ENCODE measurements at regions of chr19 and their contacts with region 1.

Region 1: GRCh38 chr19:7394731-7395359 is 46.1 kb downstream of the ARHGEF18 start:
- DNase-seq: peak; percentile 77 to 95
- H3K4me3 ChIP-seq: peak overlapping the region; percentile 81
- H3K27ac ChIP-seq: peak overlapping the region; percentile 28
- H3K4me1 ChIP-seq: peaks cover 67% of the 10 kb centered on the region
- H3K27me3 ChIP-seq: no peaks in the 10 kb centered on the region
- CTCF ChIP-seq: no peak; the same call in 1 of the 2 replicates

Region 2: GRCh38 chr19:7098701-7099596 is 295.9 kb before region 1 on chr19:
- CTCF ChIA-PET with region 1: no interaction called
- POLR2A ChIA-PET with region 1: interaction called, 11 read pairs
- intact Hi-C with region 1: no loop called
- DNase-seq: peak; percentile 65 to 81
- H3K4me3 ChIP-seq: peak overlapping the region; percentile 79
- H3K27ac ChIP-seq: peak overlapping the region; percentile 73
- H3K4me1 ChIP-seq: 0 out of 2 replicates have a peak, but pooled peaks cover 4% of the 10 kb centered on the region
- H3K27me3 ChIP-seq: no peaks in the 10 kb centered on the region
- CTCF ChIP-seq: no peak

Region 3: DNA sequence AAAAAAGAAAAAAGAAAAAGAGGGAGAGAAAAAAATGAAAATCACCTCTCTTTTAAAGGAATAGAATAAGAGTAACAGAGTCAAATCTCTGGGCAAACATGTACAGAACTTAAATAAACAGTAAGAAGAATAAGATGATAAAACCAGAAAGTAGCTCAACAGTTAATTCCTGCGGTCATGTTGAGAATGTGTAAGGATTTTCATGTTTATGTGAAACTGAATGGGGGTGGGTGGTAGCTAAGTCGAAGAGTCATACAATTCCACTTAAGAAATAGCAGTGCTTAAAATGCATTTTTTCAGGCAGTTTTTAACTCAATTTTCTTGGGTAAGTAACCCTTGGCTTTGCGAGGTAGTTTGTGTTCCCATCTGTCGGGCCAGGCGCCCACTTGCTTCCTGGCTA is 33.1 kb after region 1 on chr19:
- CTCF ChIA-PET with region 1: interaction called, 15 read pairs
- POLR2A ChIA-PET with region 1: no interaction called
- intact Hi-C with region 1: loop called (anchors 1 kb)
- DNase-seq: no peak
- H3K4me3 ChIP-seq: no peak overlapping the region
- H3K27ac ChIP-seq: no peak overlapping the region
- H3K4me1 ChIP-seq: peaks cover 37% of the 10 kb centered on the region
- H3K27me3 ChIP-seq: no peaks in the 10 kb centered on the region
- CTCF ChIP-seq: no peak

Region 4: GRCh38 chr19:7460562-7460966 is 65.7 kb after region 1 on chr19:
- CTCF ChIA-PET with region 1: no interaction called
- POLR2A ChIA-PET with region 1: interaction called, 4 read pairs
- intact Hi-C with region 1: loop called (anchors 2 kb)
- DNase-seq: peak; percentile 92 to 99
- H3K4me3 ChIP-seq: peak overlapping the region; percentile 32; the same call in 1 of the 2 replicates
- H3K27ac ChIP-seq: peak overlapping the region; percentile 98
- H3K4me1 ChIP-seq: peaks cover 36% of the 10 kb centered on the region
- H3K27me3 ChIP-seq: no peaks in the 10 kb centered on the region
- CTCF ChIP-seq: no peak

Region 5: DNA sequence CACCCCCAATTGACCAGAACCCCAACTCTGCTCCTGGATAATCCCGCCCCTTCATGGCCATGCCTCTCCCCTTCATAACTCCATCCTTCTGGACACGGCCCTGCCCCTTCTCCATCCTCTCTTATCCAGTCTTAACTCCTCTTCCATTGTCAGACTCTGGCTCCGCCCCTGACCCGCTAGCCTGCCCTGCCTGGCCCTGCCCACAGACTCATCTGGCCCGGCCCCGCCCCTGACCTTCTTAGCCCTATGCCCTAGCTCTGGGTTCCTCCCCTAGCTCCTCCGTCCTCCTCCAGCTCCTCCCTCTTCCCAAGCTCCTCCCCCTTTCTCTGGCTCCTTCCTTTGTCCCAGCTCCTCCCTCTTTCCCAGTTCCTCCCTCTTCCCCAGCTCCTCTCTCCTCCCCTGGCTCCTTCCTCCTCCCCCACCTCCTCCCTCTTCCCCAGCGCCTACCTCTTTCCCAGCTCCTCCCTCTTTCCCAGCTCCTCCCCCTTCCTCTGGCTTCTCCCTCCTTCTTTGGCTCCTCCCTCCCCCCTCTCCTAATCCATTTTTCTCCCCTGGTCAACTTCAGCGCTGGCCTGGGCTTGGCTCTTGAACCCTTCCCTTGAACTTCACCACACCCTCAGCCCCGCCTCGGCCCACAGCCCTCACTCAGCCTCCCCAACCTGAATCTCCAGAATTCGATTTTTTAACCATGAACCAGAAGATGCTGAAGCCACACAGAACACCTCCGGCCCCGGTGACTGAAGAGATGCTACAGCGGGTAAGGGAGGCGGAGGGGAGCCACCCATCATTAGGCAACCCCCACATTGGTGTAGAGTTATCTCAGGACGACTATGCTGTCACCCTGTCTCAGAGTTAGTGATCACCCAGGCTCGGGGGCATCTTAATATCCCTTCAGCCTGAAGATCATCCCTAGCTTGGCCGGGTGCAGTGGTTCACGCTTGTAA is 111.8 kb after region 1 on chr19:
- CTCF ChIA-PET with region 1: interaction called, 19 read pairs
- POLR2A ChIA-PET with region 1: interaction called, 22 read pairs
- intact Hi-C with region 1: loop called (anchors 5 kb)
- DNase-seq: peak; percentile 98
- H3K4me3 ChIP-seq: no peak overlapping the region; the same call in 1 of the 2 replicates
- H3K27ac ChIP-seq: no peak overlapping the region
- H3K4me1 ChIP-seq: peaks cover 24% of the 10 kb centered on the region
- H3K27me3 ChIP-seq: no peaks in the 10 kb centered on the region
- CTCF ChIP-seq: no peak

Region 6: DNA sequence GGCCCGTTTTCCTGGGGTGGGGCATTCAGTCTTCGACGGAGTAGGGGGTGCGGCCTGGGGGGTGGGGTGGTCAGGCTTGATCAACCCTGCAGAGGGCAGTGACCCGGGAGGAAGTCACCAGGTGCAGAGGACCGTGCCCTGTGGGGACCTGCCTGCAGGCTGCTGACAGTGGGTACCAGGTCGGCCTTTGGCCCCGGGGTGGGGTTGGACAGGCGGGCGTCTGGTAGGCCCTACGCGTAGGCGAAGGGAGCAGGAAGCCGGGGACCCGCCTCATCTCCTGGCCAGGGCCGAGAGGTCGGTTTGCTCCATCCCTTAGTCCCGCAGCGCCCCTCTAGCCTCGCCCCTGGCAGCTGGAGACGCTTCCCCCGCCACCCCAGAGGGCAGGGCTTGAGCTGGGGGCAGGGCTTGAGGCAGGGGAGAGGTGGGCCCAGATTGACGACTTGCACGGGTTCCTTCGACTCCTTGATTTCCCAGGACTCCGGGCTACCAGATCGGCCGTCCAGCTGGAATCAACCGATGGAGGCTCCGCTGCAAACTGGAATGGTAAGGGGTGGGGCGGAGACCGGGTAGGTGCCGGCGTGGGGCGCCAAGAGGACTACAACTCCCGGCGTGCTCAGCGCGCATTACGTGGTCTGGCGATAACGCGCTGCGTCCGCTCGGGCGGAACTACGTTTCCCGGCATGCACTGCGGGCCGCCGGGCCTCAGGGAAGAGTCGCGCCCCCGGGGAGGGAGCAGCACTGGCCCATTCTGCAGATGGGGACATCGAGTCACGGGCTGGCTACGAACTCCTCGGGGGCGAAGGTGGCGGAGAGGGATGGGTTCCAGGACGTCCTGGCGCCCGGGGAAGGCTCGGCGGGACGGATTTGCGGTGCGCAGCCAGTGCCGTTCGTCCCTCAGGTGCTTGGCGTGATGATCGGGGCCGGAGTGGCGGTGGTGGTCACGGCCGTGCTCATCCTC is 140.5 kb after region 1 on chr19 and contains the start of gene PNPLA6:
- CTCF ChIA-PET with region 1: interaction called, 5 read pairs
- POLR2A ChIA-PET with region 1: no interaction called
- intact Hi-C with region 1: loop called (anchors 10 kb)
- DNase-seq: peak; percentile 87 to 92
- H3K4me3 ChIP-seq: peak within 1 kb of the TSS; percentile 83
- H3K27ac ChIP-seq: peak within 1 kb of the TSS; percentile 76; the same call in 1 of the 2 replicates
- H3K4me1 ChIP-seq: peaks cover 9% of the 10 kb centered on the region
- H3K27me3 ChIP-seq: no peaks in the 10 kb centered on the region
- CTCF ChIP-seq: no peak
- total RNA-seq, gene PNPLA6: 121 and 139 TPM in 2 replicates

Region 7: GRCh38 chr19:7552781-7553180 is 157.9 kb after region 1 on chr19:
- CTCF ChIA-PET with region 1: interaction called, 4 read pairs
- POLR2A ChIA-PET with region 1: interaction called, 18 read pairs
- intact Hi-C with region 1: no loop called
- DNase-seq: no peak
- H3K4me3 ChIP-seq: no peak overlapping the region
- H3K27ac ChIP-seq: no peak overlapping the region
- H3K4me1 ChIP-seq: no peaks in the 10 kb centered on the region
- H3K27me3 ChIP-seq: no peaks in the 10 kb centered on the region
- CTCF ChIP-seq: no peak